HepG2 (cell line): ENCODE measurements at regions of chr6 and their contacts with region 1.

Region 1: DNA sequence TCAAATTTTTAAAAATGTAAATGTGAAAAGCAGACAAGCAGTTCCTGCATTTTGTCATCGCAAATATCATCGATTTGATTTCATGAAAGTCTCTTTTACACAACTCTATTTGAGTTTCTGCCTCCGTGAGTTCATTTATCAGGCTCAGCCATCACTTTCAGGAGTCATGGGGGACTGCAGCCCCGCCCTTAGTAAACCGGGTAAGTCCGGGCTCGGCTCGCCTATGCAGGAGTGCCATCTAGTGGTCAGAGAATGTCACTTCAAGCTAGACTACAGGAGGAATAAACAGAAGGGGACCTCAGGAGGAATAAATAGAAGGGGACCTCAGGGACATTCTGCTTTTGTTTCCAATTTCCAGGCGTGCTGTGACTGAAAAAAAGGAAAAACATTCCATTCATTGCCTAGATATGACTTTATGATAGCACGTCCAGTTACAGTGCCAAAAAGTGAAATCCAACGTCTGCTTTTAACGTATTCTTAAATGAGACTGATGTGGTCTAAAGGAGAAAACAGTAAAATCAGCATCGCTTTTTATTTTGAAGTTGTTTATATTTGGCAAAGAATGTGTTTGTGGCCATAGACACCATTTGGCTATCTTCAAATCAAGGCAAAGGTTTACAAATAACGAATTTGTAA is 333.9 kb downstream of the HACE1 start:
- DNase-seq: peak; percentile 77
- ATAC-seq: peak; percentile 95
- H3K4me3 ChIP-seq: no peak overlapping the region
- H3K27ac ChIP-seq: no peak overlapping the region
- H3K4me1 ChIP-seq: peaks cover 24% of the 10 kb centered on the region
- H3K27me3 ChIP-seq: no peaks in the 10 kb centered on the region
- CTCF ChIP-seq: peak; percentile 91
- EP300 ChIP-seq: no peak
- POLR2A ChIP-seq: no peak
- RAD21 ChIP-seq: peak; percentile 80

Region 2: GRCh38 chr6:104003803-104004516 is 521.8 kb before region 1 on chr6:
- CTCF ChIA-PET with region 1: interaction called, 7 read pairs
- POLR2A ChIA-PET with region 1: no interaction called
- in situ Hi-C with region 1: no loop called
- intact Hi-C with region 1: loop called (anchors 1 kb)
- DNase-seq: peak; percentile 13
- ATAC-seq: peak; percentile 59; the same call in 2 of the 3 replicates
- H3K4me3 ChIP-seq: no peak overlapping the region
- H3K27ac ChIP-seq: no peak overlapping the region
- H3K4me1 ChIP-seq: no peaks in the 10 kb centered on the region
- H3K27me3 ChIP-seq: no peaks in the 10 kb centered on the region
- CTCF ChIP-seq: peak; percentile 14; the same call in 1 of the 2 replicates
- EP300 ChIP-seq: no peak
- POLR2A ChIP-seq: no peak
- RAD21 ChIP-seq: no peak

Region 3: GRCh38 chr6:104227508-104227907 is 298.3 kb before region 1 on chr6:
- CTCF ChIA-PET with region 1: no interaction called
- POLR2A ChIA-PET with region 1: no interaction called
- in situ Hi-C with region 1: no loop called
- intact Hi-C with region 1: loop called (anchors 5 kb)
- DNase-seq: no peak
- ATAC-seq: no peak
- H3K4me3 ChIP-seq: no peak overlapping the region
- H3K27ac ChIP-seq: no peak overlapping the region
- H3K4me1 ChIP-seq: no peaks in the 10 kb centered on the region
- H3K27me3 ChIP-seq: no peaks in the 10 kb centered on the region; a peak in 1 of 5 replicates
- CTCF ChIP-seq: no peak
- EP300 ChIP-seq: no peak
- POLR2A ChIP-seq: no peak
- RAD21 ChIP-seq: no peak

Region 4: GRCh38 chr6:104239971-104240370 is 285.8 kb before region 1 on chr6:
- CTCF ChIA-PET with region 1: no interaction called
- POLR2A ChIA-PET with region 1: no interaction called
- in situ Hi-C with region 1: no loop called
- intact Hi-C with region 1: no loop called
- DNase-seq: no peak
- ATAC-seq: no peak
- H3K4me3 ChIP-seq: no peak overlapping the region
- H3K27ac ChIP-seq: no peak overlapping the region
- H3K4me1 ChIP-seq: no peaks in the 10 kb centered on the region
- H3K27me3 ChIP-seq: no peaks in the 10 kb centered on the region
- CTCF ChIP-seq: no peak
- EP300 ChIP-seq: no peak
- POLR2A ChIP-seq: no peak
- RAD21 ChIP-seq: no peak

Region 5: DNA sequence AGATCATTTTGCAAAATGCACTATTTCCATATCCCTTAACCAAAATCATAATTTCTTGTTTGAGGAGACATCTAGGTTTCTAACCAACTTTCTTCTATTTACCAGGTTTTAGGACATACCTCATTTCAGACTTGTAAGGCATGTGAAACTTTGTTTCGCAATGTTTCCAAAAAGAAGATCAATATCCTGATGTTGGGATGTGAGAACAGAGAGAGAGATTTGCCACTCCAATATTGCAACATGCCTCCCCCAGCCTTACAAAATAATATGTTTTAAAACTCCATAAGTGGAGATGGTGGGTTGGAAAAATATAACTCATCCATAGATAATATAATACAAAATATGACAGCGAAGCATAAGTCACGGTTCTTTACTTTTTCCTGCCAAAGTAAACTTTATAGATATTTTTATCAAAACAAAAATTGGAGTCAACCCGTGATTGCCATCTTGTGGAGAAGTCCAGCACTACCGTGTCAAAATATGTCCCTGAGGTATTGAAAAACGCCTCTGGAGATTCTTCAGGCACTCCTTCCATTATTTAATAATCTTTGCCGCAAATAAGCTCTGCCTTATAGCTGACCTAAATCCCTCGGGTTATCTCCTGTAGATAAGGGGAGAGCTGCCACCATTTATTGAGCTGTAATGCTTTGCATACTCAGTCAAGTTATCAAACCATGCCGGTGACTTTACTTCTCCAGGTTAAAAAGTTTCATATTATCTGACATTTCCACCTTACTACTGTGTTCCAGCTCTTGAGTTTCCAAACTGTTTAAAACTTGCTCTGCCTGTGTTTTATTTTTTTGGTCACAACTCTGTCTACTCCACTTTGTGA is 200.2 kb before region 1 on chr6:
- CTCF ChIA-PET with region 1: no interaction called
- POLR2A ChIA-PET with region 1: no interaction called
- in situ Hi-C with region 1: no loop called
- intact Hi-C with region 1: loop called (anchors 1 kb)
- DNase-seq: no peak
- ATAC-seq: no peak
- H3K4me3 ChIP-seq: no peak overlapping the region
- H3K27ac ChIP-seq: no peak overlapping the region
- H3K4me1 ChIP-seq: no peaks in the 10 kb centered on the region
- H3K27me3 ChIP-seq: no peaks in the 10 kb centered on the region
- CTCF ChIP-seq: peak; percentile 43
- EP300 ChIP-seq: no peak
- POLR2A ChIP-seq: no peak
- RAD21 ChIP-seq: no peak

Region 6: DNA sequence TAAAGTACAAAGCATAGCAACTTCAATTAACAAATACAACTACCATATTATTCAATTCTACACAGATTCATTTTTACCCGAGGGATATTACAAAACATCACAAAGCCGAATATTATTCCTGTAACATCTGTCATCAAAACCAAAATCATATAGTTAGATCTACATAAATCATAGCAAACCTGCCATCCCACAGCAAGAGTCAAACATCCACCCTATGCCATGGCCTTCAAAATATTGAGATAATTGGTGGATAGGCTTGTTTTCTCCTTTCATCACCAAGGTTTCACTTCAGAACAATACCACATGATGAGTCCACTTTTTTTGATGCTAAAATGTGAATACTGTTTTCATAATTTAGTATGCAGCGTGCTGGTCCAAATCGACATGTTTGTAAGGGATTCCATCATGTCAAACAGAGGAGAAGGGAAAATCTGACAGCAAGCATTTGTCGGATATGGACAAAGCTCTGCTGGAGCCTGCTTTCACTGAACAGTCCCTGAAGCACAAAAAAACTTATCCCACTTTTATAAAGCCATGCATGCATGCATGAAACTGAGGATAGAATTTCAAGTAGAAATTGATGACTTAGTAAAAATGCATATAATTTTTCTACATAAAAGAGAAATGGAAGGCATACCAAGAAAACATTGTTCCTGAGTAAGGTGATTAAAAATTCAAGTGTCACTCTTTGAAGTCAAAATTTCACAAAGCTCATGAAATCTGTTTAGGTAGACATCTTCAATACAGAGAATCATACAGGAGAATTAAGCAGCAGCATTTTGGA is 160.2 kb before region 1 on chr6:
- CTCF ChIA-PET with region 1: no interaction called
- POLR2A ChIA-PET with region 1: no interaction called
- in situ Hi-C with region 1: no loop called
- intact Hi-C with region 1: no loop called
- DNase-seq: no peak
- ATAC-seq: no peak
- H3K4me3 ChIP-seq: no peak overlapping the region
- H3K27ac ChIP-seq: no peak overlapping the region
- H3K4me1 ChIP-seq: no peaks in the 10 kb centered on the region
- H3K27me3 ChIP-seq: no peaks in the 10 kb centered on the region; a peak in 1 of 5 replicates
- CTCF ChIP-seq: no peak
- EP300 ChIP-seq: no peak
- POLR2A ChIP-seq: no peak
- RAD21 ChIP-seq: no peak

Region 7: DNA sequence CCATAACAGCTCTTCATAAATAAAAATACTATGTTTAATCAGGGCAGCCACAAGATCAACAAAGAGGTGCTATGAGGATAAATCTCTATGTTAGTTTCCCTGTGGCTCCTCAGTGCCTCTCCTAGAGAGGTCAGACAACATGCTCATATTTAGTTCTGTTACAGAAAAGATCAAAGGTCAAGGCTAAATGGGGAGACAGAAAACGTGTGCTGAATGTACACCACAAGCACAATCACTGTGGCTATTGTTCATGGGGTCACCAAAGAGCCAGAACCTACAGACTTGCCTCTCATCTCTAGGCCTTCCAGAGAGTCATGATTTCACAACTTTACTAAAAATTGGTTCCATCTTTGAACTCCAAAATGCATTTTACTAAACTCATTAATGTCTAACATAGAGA is 75.9 kb before region 1 on chr6:
- CTCF ChIA-PET with region 1: no interaction called
- POLR2A ChIA-PET with region 1: no interaction called
- in situ Hi-C with region 1: no loop called
- intact Hi-C with region 1: no loop called
- DNase-seq: peak; percentile 64
- ATAC-seq: peak; percentile 61
- H3K4me3 ChIP-seq: no peak overlapping the region
- H3K27ac ChIP-seq: no peak overlapping the region
- H3K4me1 ChIP-seq: peaks cover 7% of the 10 kb centered on the region; the same call in 1 of the 2 replicates
- H3K27me3 ChIP-seq: no peaks in the 10 kb centered on the region
- CTCF ChIP-seq: no peak
- EP300 ChIP-seq: no peak
- POLR2A ChIP-seq: no peak
- RAD21 ChIP-seq: no peak

Region 8: DNA sequence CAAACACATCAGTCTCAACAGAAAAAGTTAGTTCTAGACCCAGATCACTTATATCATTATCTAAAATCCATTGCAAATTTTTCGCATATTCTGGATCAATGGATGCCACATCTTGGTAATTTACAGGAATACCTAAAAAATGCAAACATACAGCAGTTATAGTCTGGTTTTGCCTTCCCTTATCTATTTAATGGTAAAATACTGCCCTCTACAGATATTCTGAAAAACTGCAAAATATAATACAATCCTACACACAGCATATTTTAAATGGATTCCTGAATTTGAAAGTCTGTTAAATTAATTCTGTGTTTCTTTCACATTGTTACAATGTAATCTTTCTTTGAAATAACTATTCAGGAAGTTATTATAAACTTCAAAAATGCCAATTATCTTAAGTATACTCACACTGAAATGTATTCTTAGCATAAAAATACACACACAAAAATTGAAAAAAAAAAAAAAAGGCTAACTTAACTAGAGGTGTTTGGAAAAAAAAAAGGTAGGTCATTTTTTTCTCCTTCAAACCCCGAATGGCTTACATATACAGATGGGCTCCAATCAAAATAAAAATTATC is 245.6 kb after region 1 on chr6:
- CTCF ChIA-PET with region 1: no interaction called
- POLR2A ChIA-PET with region 1: no interaction called
- in situ Hi-C with region 1: no loop called
- intact Hi-C with region 1: loop called (anchors 1 kb)
- DNase-seq: peak; percentile 10
- ATAC-seq: peak; percentile 76
- H3K4me3 ChIP-seq: no peak overlapping the region
- H3K27ac ChIP-seq: no peak overlapping the region
- H3K4me1 ChIP-seq: no peaks in the 10 kb centered on the region
- H3K27me3 ChIP-seq: no peaks in the 10 kb centered on the region
- CTCF ChIP-seq: peak; percentile 48
- EP300 ChIP-seq: no peak
- POLR2A ChIP-seq: no peak
- RAD21 ChIP-seq: no peak